ENCODE measurements at regions of chr1 and their contacts with region 1.

Region 1: DNA sequence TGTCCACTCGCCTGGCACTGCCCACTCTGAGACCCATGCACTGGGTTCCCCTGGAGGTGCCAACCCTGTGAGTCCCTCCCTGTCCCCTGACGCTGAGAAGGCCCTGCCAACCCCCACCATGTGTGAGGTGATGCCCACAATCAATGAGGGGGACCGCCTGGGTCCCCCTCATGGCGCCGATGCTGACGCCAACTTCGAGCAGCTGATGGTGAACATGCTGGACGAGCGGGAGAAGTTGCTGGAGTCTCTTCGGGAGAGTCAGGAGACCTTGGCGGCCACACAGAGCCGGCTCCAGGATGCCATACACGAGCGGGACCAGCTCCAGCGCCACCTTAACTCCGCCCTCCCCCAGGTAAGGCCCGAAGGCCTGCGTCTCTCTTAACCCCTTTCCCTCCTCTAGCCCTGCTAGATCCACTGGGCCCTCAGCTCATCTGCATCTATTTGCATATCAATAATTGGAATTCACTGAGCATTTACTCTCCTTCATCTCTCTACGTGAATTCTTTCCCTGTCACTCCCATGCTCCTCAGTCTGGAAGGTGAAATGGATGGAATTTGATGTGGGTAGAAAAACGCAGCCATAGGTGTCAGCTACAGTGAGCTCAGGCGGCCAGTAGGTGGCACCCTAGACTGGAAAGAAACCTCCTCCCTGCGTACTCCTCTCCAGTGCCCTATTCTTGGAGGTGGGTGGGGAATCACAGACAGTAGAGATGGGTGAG is 12.8 kb downstream of the PPFIA4 start:
- DNase-seq: peak; percentile 80
- ATAC-seq: peak; percentile 89 to 90
- H3K4me3 ChIP-seq: no peak overlapping the region
- H3K27ac ChIP-seq: no peak overlapping the region
- H3K4me1 ChIP-seq: no peaks in the 10 kb centered on the region
- H3K27me3 ChIP-seq: peaks cover 5% of the 10 kb centered on the region
- CTCF ChIP-seq: peak; percentile 89

Region 2: DNA sequence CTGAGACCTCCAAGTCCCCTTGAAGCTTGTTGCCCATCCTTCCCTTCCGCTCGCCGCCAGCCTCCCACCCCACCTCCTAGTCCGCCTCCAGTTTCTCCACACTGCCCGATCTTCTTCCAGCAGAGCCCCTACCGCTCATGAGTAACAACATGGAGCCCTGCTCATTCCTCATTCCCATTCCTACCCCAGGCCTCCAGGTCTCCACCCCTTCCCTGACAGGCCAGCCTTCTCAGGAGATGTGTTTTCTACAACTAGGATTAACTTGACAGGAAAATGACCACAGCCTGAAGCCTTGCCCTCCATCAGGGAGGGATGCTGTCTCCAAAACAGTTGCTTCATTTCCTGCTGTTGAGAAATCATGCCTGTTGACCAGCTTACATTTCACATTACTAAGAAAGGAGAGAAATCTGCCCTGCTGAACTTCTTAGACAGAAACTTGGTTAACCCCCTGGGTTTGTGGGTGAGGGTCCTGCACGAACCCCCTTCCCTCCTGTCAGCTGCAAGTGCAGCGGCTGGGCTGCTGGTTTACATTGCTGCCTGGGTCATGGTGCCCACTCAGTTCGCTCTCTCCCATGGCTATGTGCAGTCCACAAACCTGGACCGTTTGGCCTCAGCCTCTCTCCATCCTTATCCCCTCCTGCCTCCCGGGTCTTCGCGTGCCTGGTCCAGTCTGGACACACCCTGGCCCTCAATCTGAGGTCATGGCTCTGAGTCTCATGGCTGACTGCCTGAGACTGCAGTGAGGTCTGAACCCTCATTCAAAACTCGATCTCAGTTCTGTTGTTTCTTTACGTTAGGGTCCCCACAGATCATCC is 163.6 kb after region 1 on chr1:
- intact Hi-C with region 1: loop called (anchors 10 kb)
- DNase-seq: no peak
- ATAC-seq: peak; percentile 53 to 66
- H3K4me3 ChIP-seq: no peak overlapping the region
- H3K27ac ChIP-seq: peak overlapping the region; percentile 37
- H3K4me1 ChIP-seq: peaks cover 39% of the 10 kb centered on the region
- H3K27me3 ChIP-seq: no peaks in the 10 kb centered on the region
- CTCF ChIP-seq: no peak

Measured in lower lobe of right lung (tissue), 2 donors.